Sciatic nerve (tissue), 2 donors: ENCODE measurements at regions of chr5 and their contacts with region 1.

Region 1: DNA sequence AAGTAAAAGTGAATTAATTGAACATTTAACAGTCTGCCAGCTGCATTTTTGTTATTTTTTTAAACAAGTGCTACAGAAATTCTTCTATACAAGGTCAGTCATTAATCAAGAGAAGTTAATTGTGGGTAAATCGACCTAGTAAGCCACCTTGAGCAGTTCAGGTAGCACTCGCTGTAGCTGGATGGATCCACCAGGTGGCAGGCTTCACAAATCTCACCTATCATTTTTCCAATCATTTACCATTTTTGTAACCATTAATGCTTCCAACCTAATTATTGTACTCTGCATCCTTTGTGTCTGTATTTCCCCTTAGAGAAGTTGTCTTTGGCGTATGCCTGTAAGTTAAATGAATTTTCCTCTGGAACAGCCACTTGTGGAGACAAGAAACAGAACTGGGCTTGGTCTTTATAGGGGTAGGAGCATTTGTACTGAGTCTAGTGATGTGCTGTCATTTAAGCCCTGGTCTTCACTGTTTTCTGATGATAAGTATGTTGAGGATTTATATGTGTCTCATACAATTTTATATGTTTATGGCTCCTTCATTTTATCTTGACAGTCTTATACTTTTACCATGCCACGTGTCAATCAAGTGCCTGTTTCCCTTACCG is 39.5 kb downstream of the CD180 start:
- DNase-seq: no peak
- ATAC-seq: peak; percentile 44

Region 2: DNA sequence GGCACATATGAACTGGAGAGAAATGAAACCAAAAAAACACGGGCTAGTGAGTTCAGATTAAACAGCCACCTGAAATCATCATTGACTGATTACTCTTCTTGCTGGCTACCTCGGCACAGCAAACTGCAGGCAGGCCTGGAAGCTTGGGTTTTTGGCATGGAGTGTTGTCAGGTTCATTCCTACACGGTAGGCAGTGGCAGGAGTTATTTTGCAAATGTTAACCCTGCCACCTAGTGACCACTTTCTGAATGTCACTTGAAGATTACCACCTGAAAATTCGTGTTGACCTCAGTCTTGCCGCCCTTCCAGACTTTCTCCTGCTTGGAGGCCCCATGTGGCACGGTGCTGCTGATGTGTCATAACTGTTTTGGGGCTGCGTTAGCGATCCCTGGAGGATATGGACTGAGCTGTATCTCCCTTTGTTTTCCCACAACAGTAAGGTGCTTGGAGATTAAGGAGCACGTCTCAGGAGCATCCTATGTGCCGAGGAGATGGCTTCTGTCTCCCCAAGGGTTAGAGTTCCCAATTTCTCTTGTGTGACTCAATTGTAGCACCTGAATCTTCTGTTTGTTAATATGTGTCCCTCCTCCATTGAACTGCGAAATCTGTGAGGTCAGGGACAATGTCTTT is 52.2 kb after region 1 on chr5:
- intact Hi-C with region 1: loop called (anchors 5 kb)
- DNase-seq: no peak
- ATAC-seq: peak; percentile 83

Region 3: DNA sequence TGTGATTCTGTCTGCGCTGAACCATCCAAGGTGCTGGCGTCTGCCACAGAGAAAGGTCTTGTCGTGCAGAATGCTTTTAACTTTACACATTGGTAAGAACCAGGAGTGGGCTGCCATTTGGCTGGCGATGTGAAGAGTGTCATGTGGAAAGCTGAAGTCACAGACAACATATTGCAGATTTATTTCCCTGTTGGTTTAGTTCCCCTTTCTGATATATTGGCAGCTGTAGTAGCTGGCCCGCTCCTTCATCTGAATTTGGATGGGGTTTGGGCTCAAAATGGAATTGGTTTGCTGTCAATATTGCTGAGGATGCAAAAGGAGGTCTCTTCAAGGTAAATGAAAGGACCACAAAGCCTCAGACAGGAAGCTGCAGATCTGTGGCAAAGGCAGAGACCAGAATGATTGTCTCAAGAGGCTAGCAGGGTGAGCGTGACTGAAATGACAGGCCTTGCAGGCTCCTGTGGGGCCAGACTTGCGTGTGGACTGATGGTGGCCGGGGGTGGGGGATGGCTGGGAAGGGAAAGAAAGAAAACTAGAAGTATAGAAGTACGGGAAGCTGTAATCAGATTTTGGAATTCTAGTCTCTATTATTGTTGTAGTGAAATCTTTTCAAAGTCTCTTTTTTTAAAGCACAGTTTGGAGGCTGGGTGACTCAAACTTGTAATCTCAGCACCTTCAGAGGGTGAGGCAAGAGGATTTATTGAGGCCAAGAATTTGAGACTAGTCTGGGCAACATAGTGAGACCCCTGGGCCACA is 64.6 kb after region 1 on chr5:
- intact Hi-C with region 1: no loop called
- DNase-seq: no peak
- ATAC-seq: peak; percentile 64